ENCODE measurements at regions of chr7 and their contacts with region 1.

Region 1: GRCh38 chr7:27774717-27775328 is 34.9 kb downstream of the TAX1BP1 start:
- DNase-seq: no peak
- H3K4me3 ChIP-seq: no peak overlapping the region
- H3K27ac ChIP-seq: no peak overlapping the region
- H3K4me1 ChIP-seq: no peaks in the 10 kb centered on the region
- H3K27me3 ChIP-seq: no peaks in the 10 kb centered on the region
- CTCF ChIP-seq: peak; percentile 23 to 74 (median 56)
- POLR2A ChIP-seq: no peak

Region 2: DNA sequence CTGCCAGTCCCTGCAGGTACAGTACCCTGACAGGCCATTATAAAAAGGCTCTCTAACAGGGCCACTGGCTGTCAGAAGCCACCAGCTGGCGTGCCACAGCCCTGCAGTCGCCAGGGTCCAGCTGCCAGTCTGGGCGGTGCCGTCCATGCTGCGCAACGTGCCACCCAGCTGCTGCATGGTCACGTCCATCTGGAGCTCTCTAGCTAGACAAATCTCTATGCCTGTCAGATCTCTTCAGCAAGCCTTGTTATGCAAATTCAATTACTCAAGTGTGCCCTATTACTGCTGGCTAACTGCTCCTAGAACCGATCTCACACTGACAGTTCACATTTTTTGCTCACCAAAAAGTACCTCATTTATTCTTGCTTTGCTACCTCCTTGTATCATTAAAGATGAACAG is 188.0 kb before region 1 on chr7:
- intact Hi-C with region 1: loop called (anchors 10 kb)
- DNase-seq: no peak
- H3K4me3 ChIP-seq: no peak overlapping the region
- H3K27ac ChIP-seq: no peak overlapping the region
- H3K4me1 ChIP-seq: no peaks in the 10 kb centered on the region
- H3K27me3 ChIP-seq: no peaks in the 10 kb centered on the region
- CTCF ChIP-seq: no peak
- POLR2A ChIP-seq: no peak